ENCODE measurements at regions of chr12 and their contacts with region 1.

Region 1: GRCh38 chr12:8890313-8891085 is 23.8 kb upstream of the PHC1 start:
- DNase-seq: peak; percentile 67
- H3K4me3 Mint-ChIP-seq: peak overlapping the region; percentile 83
- H3K27ac Mint-ChIP-seq: peak overlapping the region; percentile 86
- H3K4me1 Mint-ChIP-seq: peaks cover 6% of the 10 kb centered on the region
- H3K27me3 Mint-ChIP-seq: no peaks in the 10 kb centered on the region
- CTCF ChIP-seq: peak; percentile 82

Region 2: DNA sequence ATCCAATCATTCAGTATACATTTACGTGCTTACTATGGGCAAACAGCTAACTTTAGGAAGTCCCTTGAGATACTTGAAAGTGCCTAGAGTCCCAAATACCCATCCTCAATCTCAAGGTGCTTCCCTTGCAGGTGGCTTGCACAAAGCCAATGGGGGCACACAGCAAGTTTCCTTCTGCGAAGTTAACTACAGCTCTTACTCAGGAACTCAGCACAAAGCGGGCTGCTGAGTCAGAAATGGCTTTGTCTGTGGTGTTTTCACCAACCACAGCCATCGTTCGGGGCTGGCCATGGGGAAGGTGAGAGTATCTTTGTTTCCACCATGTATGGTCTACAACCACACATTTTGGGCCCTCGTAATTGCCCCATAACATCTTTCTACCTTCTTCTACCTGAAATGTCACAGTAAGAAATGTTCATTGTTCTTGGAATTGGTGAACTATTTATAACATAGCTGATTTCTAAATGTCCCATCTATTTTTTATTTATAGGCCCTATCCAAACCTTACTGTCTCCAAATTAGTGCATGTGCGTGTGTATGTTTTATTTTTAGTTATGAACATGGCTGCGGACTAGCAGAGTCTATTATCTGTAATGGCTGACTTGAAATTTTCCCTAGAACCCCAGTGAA is 241.8 kb before region 1 on chr12:
- CTCF ChIA-PET with region 1: interaction called, 10 read pairs
- POLR2A ChIA-PET with region 1: no interaction called
- intact Hi-C with region 1: no loop called
- DNase-seq: no peak
- H3K4me3 Mint-ChIP-seq: no peak overlapping the region
- H3K27ac Mint-ChIP-seq: no peak overlapping the region
- H3K4me1 Mint-ChIP-seq: peaks cover 10% of the 10 kb centered on the region
- H3K27me3 Mint-ChIP-seq: no peaks in the 10 kb centered on the region
- CTCF ChIP-seq: no peak

Region 3: DNA sequence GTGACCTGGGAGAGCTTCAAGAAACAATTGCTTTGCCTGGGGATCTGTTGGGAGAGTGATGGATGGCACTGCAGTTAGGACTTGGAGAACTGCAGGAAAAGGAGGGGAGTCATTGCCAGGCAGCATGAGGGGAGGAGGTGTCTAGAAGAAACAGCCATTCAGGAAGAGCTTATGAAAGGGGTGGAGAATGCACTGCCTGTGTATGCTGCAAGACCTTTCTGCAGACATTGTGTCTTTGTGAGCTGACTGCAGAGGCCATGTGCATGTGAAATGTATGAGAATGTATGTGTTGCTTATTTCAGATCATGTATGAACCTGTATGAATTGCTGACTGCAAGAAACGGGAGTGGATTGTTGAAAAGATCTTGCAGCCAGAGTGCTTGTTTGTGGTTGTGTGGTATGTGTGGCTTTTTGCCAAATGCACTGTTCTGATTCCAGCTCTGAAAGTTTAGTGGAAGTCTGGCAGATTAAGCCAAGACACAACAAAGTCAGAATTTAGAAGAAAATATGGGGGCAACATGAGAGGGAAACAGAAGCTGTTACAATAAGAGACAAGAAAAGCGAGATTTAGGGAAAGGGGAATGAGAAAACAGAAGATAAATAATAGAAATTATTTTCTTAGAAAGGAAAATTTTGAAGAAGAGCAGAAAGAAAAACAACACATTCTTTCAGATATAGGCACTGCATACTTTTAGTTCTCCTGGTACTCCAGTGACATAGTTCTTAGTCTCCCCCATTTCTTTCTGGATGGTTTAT is 202.5 kb before region 1 on chr12:
- CTCF ChIA-PET with region 1: interaction called, 165 read pairs
- POLR2A ChIA-PET with region 1: interaction called, 9 read pairs
- intact Hi-C with region 1: no loop called
- DNase-seq: peak; percentile 77
- H3K4me3 Mint-ChIP-seq: no peak overlapping the region
- H3K27ac Mint-ChIP-seq: no peak overlapping the region
- H3K4me1 Mint-ChIP-seq: no peaks in the 10 kb centered on the region
- H3K27me3 Mint-ChIP-seq: no peaks in the 10 kb centered on the region
- CTCF ChIP-seq: no peak

Region 4: GRCh38 chr12:8780389-8780788 is 110.1 kb before region 1 on chr12:
- CTCF ChIA-PET with region 1: interaction called, 21 read pairs
- POLR2A ChIA-PET with region 1: no interaction called
- intact Hi-C with region 1: loop called (anchors 10 kb)
- DNase-seq: peak; percentile 26
- H3K4me3 Mint-ChIP-seq: no peak overlapping the region
- H3K27ac Mint-ChIP-seq: no peak overlapping the region
- H3K4me1 Mint-ChIP-seq: no peaks in the 10 kb centered on the region
- H3K27me3 Mint-ChIP-seq: no peaks in the 10 kb centered on the region
- CTCF ChIP-seq: peak; percentile 19

Region 5: DNA sequence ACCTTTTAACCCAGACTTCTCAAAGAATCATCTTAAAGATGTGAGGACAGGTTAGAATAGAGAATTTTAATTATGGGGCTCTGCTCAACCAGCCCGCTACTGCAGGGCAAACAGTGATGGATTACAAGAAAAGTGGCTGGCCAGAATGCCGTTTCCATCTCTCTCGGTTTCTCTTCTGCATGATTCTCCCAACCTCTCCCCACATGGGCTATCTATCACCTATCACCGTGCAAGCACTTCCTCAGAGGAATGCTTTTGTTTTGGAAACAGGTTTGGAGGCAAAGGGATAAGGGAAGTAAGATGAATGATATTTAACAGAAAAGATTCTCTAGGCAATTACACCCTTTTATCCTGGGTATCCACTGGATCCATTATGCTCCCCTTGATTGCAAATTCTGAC is 13.6 kb before region 1 on chr12:
- CTCF ChIA-PET with region 1: interaction called, 13 read pairs
- POLR2A ChIA-PET with region 1: no interaction called
- intact Hi-C with region 1: no loop called
- DNase-seq: no peak
- H3K4me3 Mint-ChIP-seq: no peak overlapping the region
- H3K27ac Mint-ChIP-seq: no peak overlapping the region
- H3K4me1 Mint-ChIP-seq: no peaks in the 10 kb centered on the region
- H3K27me3 Mint-ChIP-seq: no peaks in the 10 kb centered on the region
- CTCF ChIP-seq: no peak

Region 6: GRCh38 chr12:9039397-9039977 is 149.0 kb after region 1 on chr12:
- CTCF ChIA-PET with region 1: interaction called, 13 read pairs
- POLR2A ChIA-PET with region 1: no interaction called
- intact Hi-C with region 1: loop called (anchors 2 kb)
- DNase-seq: peak; percentile 57
- H3K4me3 Mint-ChIP-seq: no peak overlapping the region
- H3K27ac Mint-ChIP-seq: no peak overlapping the region
- H3K4me1 Mint-ChIP-seq: no peaks in the 10 kb centered on the region
- H3K27me3 Mint-ChIP-seq: no peaks in the 10 kb centered on the region
- CTCF ChIP-seq: peak; percentile 78

Measured in MCF 10A (cell line).